ENCODE measurements at regions of chr11 and their contacts with region 1.

Region 1: GRCh38 chr11:33857933-33858371 is 33.9 kb downstream of the LMO2 start:
- DNase-seq: peak; percentile 88
- ATAC-seq: peak; percentile 88

Region 2: GRCh38 chr11:33970984-33971466 is 113.1 kb after region 1 on chr11:
- intact Hi-C with region 1: loop called (anchors 1 kb)
- DNase-seq: no peak
- ATAC-seq: peak; percentile 71

Region 3: DNA sequence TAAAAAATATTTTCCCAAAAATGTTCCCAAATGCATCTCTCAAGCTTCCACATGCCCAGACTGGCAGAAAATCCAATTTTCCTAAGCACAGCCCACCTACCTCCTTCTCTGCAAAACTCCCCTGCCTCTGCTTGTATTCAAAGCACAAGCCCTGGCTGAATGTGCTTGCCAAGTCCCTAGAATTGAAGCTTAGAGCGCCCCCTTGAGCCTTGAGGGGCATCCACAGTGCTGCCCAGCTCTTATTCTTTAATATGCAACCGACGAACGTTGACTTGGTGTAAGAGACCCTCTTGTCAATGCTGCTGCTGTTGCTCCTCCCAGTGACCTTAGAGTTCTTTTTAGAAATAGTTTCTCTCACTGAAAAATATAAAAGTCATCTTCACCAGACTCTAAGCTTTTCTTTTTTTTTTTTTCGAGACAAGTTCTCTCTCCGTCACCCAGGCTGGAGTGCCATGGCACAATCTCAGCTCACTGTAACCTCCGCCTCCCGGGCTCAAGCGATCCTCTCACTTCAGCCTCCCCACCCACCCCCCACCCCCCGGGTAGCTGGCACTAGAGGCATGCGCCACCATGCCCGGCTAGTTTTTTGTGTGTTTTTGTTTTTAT is 130.1 kb after region 1 on chr11:
- intact Hi-C with region 1: loop called (anchors 5 kb)
- DNase-seq: peak; percentile 75
- ATAC-seq: peak; percentile 83

Measured in Right ventricle myocardium inferior (tissue), 1 donor.